ENCODE measurements at regions of chr2 and their contacts with region 1.

Region 1: GRCh38 chr2:19369341-19369955 is 11.0 kb upstream of the OSR1 start:
- DNase-seq: no peak
- H3K4me3 ChIP-seq: no peak overlapping the region
- H3K27ac ChIP-seq: no peak overlapping the region
- H3K4me1 ChIP-seq: no peaks in the 10 kb centered on the region
- H3K27me3 ChIP-seq: no peaks in the 10 kb centered on the region
- CTCF ChIP-seq: no peak
- POLR2A ChIP-seq: no peak

Region 2: GRCh38 chr2:18749912-18750526 is 619.4 kb before region 1 on chr2:
- intact Hi-C with region 1: loop called (anchors 5 kb)
- DNase-seq: peak; percentile 50 to 62
- H3K4me3 ChIP-seq: no peak overlapping the region
- H3K27ac ChIP-seq: no peak overlapping the region
- H3K4me1 ChIP-seq: peaks cover 0 to 6% of the 10 kb centered on the region in 2 donors
- H3K27me3 ChIP-seq: no peaks in the 10 kb centered on the region
- CTCF ChIP-seq: peak; percentile 41 to 88 (median 72)
- POLR2A ChIP-seq: no peak

Region 3: GRCh38 chr2:19944205-19944845 is 574.9 kb after region 1 on chr2:
- intact Hi-C with region 1: no loop called
- DNase-seq: no peak
- H3K4me3 ChIP-seq: no peak overlapping the region
- H3K27ac ChIP-seq: no peak overlapping the region
- H3K4me1 ChIP-seq: no peaks in the 10 kb centered on the region
- H3K27me3 ChIP-seq: no peaks in the 10 kb centered on the region
- CTCF ChIP-seq: no peak
- POLR2A ChIP-seq: no peak